ENCODE measurements at regions of chr17 and their contacts with region 1.

Region 1: DNA sequence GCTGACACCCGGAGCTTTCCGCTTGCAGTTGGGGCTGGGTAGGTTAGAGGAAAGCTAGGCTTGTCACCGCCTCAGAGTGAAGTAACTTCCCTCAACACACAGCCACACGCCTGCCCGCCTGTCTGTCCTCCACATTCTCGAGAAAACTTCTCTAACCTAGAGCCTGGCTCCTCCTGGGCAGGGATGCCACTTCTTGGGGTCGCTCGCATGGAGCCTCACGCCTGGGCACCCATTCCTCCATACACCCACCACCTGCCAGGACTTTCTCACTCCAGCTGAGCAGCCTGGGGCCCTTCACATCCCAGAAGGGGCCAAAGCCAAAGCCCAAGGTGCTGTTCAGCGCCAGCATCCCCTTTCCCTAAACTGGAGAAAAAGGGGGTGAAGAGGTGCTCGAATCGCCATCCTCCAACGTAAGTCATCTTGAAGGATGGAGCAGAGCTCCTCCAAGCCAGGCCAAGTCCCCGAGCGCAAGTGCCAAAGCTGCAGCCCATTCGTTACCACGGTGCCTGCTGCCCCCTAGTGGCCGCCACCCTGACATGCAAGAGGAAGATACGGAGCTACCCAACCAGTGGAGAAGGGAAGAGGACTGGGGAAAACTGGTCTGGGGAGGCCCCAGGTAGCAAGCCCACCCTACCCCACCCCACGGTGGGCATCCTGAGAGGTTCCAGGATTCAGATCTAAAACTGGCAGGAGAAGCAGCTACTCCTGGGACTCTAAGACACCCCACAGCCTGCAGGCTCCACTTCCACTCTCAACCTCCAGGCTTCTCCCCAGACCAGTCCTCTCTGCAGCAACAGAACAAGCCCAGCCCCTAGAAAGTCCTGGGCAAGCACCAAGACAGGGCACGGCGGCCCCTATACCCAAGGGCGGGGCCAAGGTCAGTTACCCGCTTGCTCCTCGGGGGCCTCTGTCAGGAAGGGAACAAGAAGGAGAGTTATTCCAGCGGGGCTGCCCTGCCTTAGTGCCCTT is 63.1 kb downstream of the MYO18A start:
- DNase-seq: peak; percentile 88
- H3K4me3 Mint-ChIP-seq: no peak overlapping the region
- H3K27ac Mint-ChIP-seq: no peak overlapping the region
- H3K4me1 Mint-ChIP-seq: peaks cover 9% of the 10 kb centered on the region
- H3K27me3 Mint-ChIP-seq: no peaks in the 10 kb centered on the region

Region 2: GRCh38 chr17:28967221-28968140 is 149.6 kb before region 1 on chr17:
- CTCF ChIA-PET with region 1: interaction called, 302 read pairs
- intact Hi-C with region 1: loop called (anchors 1 kb)
- DNase-seq: no peak
- H3K4me3 Mint-ChIP-seq: no peak overlapping the region
- H3K27ac Mint-ChIP-seq: no peak overlapping the region
- H3K4me1 Mint-ChIP-seq: no peaks in the 10 kb centered on the region
- H3K27me3 Mint-ChIP-seq: peaks cover 4% of the 10 kb centered on the region

Region 3: DNA sequence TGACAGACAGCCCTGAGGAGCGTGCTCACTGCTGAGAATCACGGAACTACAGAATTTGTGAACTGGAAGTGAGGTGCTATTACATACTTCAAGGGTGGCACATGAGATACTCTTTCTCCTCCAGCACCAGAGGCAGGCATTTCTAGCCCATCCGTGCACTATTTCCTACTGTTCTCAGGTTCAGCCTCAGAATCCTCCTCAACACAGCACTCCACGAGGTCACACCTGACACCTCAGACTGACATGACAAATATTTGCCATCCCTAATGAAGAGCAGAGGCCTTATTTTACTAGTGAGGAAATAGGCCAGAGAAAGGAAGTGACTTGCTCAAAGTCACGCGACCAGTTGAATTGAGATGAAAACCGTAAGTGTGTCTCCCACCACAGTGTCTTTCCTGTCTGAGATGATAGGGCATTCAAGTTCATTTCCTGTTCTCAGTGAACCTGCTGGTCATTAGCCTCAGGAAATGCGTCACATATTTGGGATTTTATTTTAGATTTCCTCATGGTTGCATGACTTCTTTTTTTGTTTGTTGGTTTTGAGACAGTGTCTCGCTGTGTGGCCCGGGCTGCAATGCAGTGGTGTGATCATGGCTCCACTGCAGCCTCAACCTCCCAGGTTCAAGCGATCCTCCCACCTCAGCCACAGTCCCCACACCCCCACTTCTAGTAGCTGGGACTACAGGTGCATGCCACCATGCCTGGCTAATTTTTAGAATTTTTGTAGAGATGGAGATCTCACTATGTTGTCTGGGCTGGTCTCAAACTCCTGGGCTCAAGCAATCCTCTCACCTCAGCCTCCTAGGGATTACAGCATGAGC is 134.7 kb before region 1 on chr17:
- CTCF ChIA-PET with region 1: interaction called, 5 read pairs
- intact Hi-C with region 1: loop called (anchors 5 kb)
- DNase-seq: peak; percentile 82
- H3K4me3 Mint-ChIP-seq: no peak overlapping the region
- H3K27ac Mint-ChIP-seq: peak overlapping the region; percentile 96
- H3K4me1 Mint-ChIP-seq: peaks cover 22% of the 10 kb centered on the region
- H3K27me3 Mint-ChIP-seq: no peaks in the 10 kb centered on the region

Region 4: DNA sequence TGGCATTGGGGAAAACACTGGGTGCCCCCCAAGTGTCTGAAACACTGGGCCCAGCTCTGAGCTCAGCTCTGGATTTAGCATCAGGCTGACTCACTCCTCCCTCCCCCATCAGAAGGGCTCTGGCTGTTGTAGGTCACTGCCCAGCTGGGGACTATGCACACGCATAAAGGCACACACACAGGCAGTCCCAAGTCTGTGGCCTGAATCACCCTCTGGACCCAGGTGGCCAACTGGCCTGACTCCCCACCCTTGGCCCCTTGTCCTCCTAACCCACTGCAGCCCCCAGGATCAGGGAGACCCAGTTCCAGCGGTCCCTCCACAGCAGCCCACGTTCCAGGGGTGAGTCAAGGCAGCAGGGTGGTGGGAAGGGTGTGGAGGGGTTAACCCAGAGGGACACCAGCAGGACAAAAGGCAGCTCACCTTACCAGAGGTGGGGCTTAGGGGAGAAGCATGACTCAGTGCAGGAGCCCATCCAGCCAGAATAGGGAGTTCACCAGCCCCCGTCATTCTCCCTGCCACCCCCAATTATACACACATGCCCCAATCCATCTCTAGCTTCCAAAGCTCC is 16.1 kb after region 1 on chr17:
- CTCF ChIA-PET with region 1: interaction called, 53 read pairs
- intact Hi-C with region 1: no loop called
- DNase-seq: no peak
- H3K4me3 Mint-ChIP-seq: no peak overlapping the region
- H3K27ac Mint-ChIP-seq: no peak overlapping the region
- H3K4me1 Mint-ChIP-seq: peaks cover 54% of the 10 kb centered on the region
- H3K27me3 Mint-ChIP-seq: no peaks in the 10 kb centered on the region

Region 5: GRCh38 chr17:29180034-29180787 is 63.1 kb after region 1 on chr17 and contains the start of gene MYO18A:
- CTCF ChIA-PET with region 1: interaction called, 10 read pairs
- intact Hi-C with region 1: no loop called
- DNase-seq: peak; percentile 84
- H3K4me3 Mint-ChIP-seq: peak within 1 kb of the TSS; percentile 55
- H3K27ac Mint-ChIP-seq: no peak within 1 kb of the TSS
- H3K4me1 Mint-ChIP-seq: peaks cover 26% of the 10 kb centered on the region
- H3K27me3 Mint-ChIP-seq: no peaks in the 10 kb centered on the region
- total RNA-seq, gene MYO18A: 23.8 to 25.0 TPM

Measured in activated naive CD4-positive, alpha-beta T cell treated with anti-CD3 and anti-CD28 coated beads for 36 hours (primary cell).